WTC11 (cell line): ENCODE measurements at regions of chr14 and their contacts with region 1.

Region 1: DNA sequence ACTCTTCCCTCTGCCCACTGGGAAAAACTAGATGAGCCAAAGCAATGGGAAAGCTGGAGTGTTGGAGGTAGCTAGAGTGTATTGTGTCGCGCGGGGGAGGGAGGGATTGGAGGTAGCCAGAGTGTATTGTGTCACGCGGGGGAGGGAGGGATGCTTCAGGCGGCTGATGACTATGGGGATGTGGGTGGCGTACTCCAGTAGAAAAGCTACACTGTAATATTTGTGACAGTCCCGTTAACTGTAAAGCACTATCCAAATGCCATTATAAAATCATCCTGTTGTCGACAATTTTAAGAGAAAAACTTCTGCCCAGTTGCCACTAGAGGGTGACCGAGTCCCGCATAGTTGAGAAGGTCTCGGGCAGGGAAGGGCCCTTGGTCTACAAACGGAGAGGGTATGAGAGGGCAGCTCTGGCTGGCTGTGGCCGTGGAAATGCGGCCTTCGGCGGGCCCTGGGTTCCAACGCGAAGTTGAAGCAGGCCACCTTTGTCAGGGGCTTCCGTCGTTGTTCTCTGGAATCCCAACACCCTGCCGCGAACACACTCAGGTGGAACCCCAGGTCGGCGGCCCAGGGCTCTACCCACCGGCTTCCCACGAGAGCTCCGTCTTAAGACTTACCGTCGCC is 15.1 kb upstream of the PLEK2 start:
- DNase-seq: peak; percentile 85
- ATAC-seq: peak; percentile 95
- H3K4me3 Mint-ChIP-seq: peak overlapping the region; percentile 20; the same call in 1 of the 2 replicates
- H3K27ac Mint-ChIP-seq: no peak overlapping the region
- H3K4me1 Mint-ChIP-seq: peaks cover 12% of the 10 kb centered on the region
- H3K27me3 Mint-ChIP-seq: peaks cover 3% of the 10 kb centered on the region; the same call in 1 of the 2 replicates
- CTCF ChIP-seq: peak; percentile 75

Region 2: GRCh38 chr14:67359775-67360648 is 67.1 kb before region 1 on chr14 and contains the starts of genes ATP6V1D and EIF2S1:
- CTCF ChIA-PET with region 1: interaction called, 14 read pairs
- POLR2A ChIA-PET with region 1: no interaction called
- DNase-seq: peak; percentile 99
- ATAC-seq: peak; percentile 96
- H3K4me3 Mint-ChIP-seq: peak within 1 kb of the TSS; percentile 99
- H3K27ac Mint-ChIP-seq: peak within 1 kb of the TSS; percentile 97
- H3K4me1 Mint-ChIP-seq: peaks cover 23% of the 10 kb centered on the region
- H3K27me3 Mint-ChIP-seq: no peaks in the 10 kb centered on the region
- CTCF ChIP-seq: peak; percentile 54; the same call in 1 of the 2 replicates
- total RNA-seq, gene ATP6V1D: 51.1 to 54.0 TPM (median 51.4 TPM) in 3 replicates
- total RNA-seq, gene EIF2S1: 123 to 137 TPM (median 125 TPM) in 3 replicates

Region 3: DNA sequence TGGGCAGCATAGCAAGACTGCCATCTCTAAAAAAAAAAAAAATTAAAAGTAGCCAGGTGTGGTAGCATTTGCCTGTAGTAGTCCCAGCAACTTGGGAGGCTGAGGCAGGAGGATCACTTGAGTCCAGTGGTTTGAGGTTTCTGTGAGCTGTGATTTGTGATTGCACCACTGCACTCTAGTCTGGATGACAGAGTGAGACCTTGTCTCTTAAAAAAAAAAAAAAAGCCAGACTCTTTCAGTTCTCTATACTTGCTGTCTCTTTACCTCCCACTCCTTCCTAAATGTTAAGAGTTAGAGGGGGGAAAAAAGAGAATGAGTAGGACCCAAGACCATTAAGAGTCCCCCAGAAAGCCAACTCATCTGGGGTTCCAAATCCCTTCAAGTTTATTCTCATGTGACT is 49.2 kb before region 1 on chr14:
- CTCF ChIA-PET with region 1: no interaction called
- POLR2A ChIA-PET with region 1: no interaction called
- DNase-seq: no peak
- ATAC-seq: no peak
- H3K4me3 Mint-ChIP-seq: no peak overlapping the region
- H3K27ac Mint-ChIP-seq: no peak overlapping the region
- H3K4me1 Mint-ChIP-seq: no peaks in the 10 kb centered on the region
- H3K27me3 Mint-ChIP-seq: no peaks in the 10 kb centered on the region
- CTCF ChIP-seq: no peak

Region 4: DNA sequence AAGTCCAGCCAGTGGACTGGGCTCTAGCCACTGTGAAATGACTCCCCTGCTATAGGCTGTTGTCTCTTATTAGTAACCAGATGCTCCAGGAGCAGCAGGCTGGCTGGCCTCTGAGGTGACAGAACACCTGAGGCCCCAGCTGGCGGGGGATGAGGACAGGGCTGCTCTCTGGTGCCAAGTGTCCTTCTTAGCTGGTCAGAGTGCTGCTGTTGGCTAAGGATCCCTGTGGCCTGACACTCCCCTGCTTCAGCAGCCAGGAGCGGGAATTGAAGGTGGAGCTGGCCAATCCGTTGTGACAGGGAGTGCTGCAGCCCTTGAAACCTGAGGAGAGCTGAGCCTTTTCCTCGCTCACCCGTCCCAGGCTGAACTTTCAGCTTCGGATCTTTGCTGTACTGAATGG is 30.7 kb after region 1 on chr14:
- CTCF ChIA-PET with region 1: interaction called, 24 read pairs
- POLR2A ChIA-PET with region 1: interaction called, 3 read pairs
- DNase-seq: peak; percentile 61
- ATAC-seq: peak; percentile 96
- H3K4me3 Mint-ChIP-seq: no peak overlapping the region
- H3K27ac Mint-ChIP-seq: 0 out of 2 replicates have a peak overlapping the region, but pooled peaks have one; percentile 36
- H3K4me1 Mint-ChIP-seq: peaks cover 18% of the 10 kb centered on the region
- H3K27me3 Mint-ChIP-seq: peaks cover 10% of the 10 kb centered on the region; the same call in 1 of the 2 replicates
- CTCF ChIP-seq: no peak

Region 5: DNA sequence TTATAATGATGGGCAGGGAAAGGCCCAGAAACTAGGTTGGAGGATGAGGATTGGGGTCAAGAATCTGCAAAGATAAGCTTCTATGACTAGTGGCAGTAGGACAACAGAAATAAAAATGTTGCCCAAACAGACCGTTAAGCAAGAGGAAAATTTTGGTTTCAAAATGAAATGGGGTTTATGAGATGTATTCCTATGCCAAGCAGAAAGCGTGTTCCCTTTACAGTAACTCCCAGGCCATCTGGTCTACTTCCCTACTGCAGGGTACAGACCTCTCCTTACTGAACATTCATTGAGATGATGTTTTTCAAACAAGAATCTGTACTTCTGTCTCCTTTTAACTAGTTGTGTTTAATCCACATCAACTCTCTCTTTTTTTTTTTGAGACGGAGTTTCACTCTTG is 81.9 kb after region 1 on chr14:
- CTCF ChIA-PET with region 1: interaction called, 62 read pairs
- POLR2A ChIA-PET with region 1: interaction called, 3 read pairs
- DNase-seq: no peak
- ATAC-seq: no peak
- H3K4me3 Mint-ChIP-seq: no peak overlapping the region
- H3K27ac Mint-ChIP-seq: no peak overlapping the region
- H3K4me1 Mint-ChIP-seq: peaks cover 9% of the 10 kb centered on the region
- H3K27me3 Mint-ChIP-seq: peaks cover 28% of the 10 kb centered on the region
- CTCF ChIP-seq: no peak

Region 6: GRCh38 chr14:67541448-67542387 is 114.6 kb after region 1 on chr14:
- CTCF ChIA-PET with region 1: interaction called, 17 read pairs
- POLR2A ChIA-PET with region 1: no interaction called
- DNase-seq: peak; percentile 67
- ATAC-seq: peak; percentile 91
- H3K4me3 Mint-ChIP-seq: peak overlapping the region; percentile 63
- H3K27ac Mint-ChIP-seq: peak overlapping the region; percentile 99
- H3K4me1 Mint-ChIP-seq: peaks cover 50% of the 10 kb centered on the region
- H3K27me3 Mint-ChIP-seq: no peaks in the 10 kb centered on the region
- CTCF ChIP-seq: no peak

Region 7: GRCh38 chr14:67599698-67600561 is 172.8 kb after region 1 on chr14 and contains the start of gene PIGH:
- CTCF ChIA-PET with region 1: interaction called, 23 read pairs
- POLR2A ChIA-PET with region 1: no interaction called
- DNase-seq: peak; percentile 92
- ATAC-seq: peak; percentile 97
- H3K4me3 Mint-ChIP-seq: peak within 1 kb of the TSS; percentile 90
- H3K27ac Mint-ChIP-seq: peak within 1 kb of the TSS; percentile 88
- H3K4me1 Mint-ChIP-seq: peaks cover 8% of the 10 kb centered on the region
- H3K27me3 Mint-ChIP-seq: peaks cover 56% of the 10 kb centered on the region
- CTCF ChIP-seq: 0 out of 2 replicates have a peak, but pooled peaks have one; percentile 22
- total RNA-seq, gene PIGH: 6.6 to 7.8 TPM (median 6.8 TPM) in 3 replicates

Region 8: GRCh38 chr14:67704484-67705089 is 277.5 kb after region 1 on chr14:
- CTCF ChIA-PET with region 1: interaction called, 54 read pairs
- POLR2A ChIA-PET with region 1: no interaction called
- DNase-seq: no peak
- ATAC-seq: peak; percentile 94
- H3K4me3 Mint-ChIP-seq: no peak overlapping the region
- H3K27ac Mint-ChIP-seq: no peak overlapping the region
- H3K4me1 Mint-ChIP-seq: 0 out of 2 replicates have a peak, but pooled peaks cover 3% of the 10 kb centered on the region
- H3K27me3 Mint-ChIP-seq: no peaks in the 10 kb centered on the region
- CTCF ChIP-seq: no peak